ENCODE measurements at regions of chr5 and their contacts with region 1.

Region 1: GRCh38 chr5:59810041-59810440 is 83.5 kb downstream of the PDE4D start:
- DNase-seq: peak; percentile 55
- ATAC-seq: peak; percentile 69
- H3K4me3 ChIP-seq: peak overlapping the region; percentile 45
- H3K27ac ChIP-seq: no peak overlapping the region
- H3K4me1 ChIP-seq: no peaks in the 10 kb centered on the region
- H3K27me3 ChIP-seq: peaks cover 7% of the 10 kb centered on the region; the same call in 1 of the 2 replicates
- CTCF ChIP-seq: peak; percentile 82

Region 2: GRCh38 chr5:59873113-59873512 is 63.1 kb after region 1 on chr5:
- CTCF ChIA-PET with region 1: no interaction called
- POLR2A ChIA-PET with region 1: no interaction called
- intact Hi-C with region 1: no loop called
- DNase-seq: no peak
- ATAC-seq: no peak
- H3K4me3 ChIP-seq: no peak overlapping the region
- H3K27ac ChIP-seq: no peak overlapping the region
- H3K4me1 ChIP-seq: no peaks in the 10 kb centered on the region
- H3K27me3 ChIP-seq: peaks cover 14% of the 10 kb centered on the region
- CTCF ChIP-seq: no peak

Region 3: GRCh38 chr5:59943452-59944113 is 133.5 kb after region 1 on chr5:
- CTCF ChIA-PET with region 1: no interaction called
- POLR2A ChIA-PET with region 1: no interaction called
- intact Hi-C with region 1: no loop called
- DNase-seq: no peak
- ATAC-seq: no peak
- H3K4me3 ChIP-seq: no peak overlapping the region
- H3K27ac ChIP-seq: no peak overlapping the region
- H3K4me1 ChIP-seq: no peaks in the 10 kb centered on the region
- H3K27me3 ChIP-seq: peaks cover 17% of the 10 kb centered on the region
- CTCF ChIP-seq: no peak

Region 4: GRCh38 chr5:60161340-60161934 is 351.4 kb after region 1 on chr5:
- CTCF ChIA-PET with region 1: no interaction called
- POLR2A ChIA-PET with region 1: no interaction called
- intact Hi-C with region 1: loop called (anchors 1 kb)
- DNase-seq: peak; percentile 53
- ATAC-seq: no peak
- H3K4me3 ChIP-seq: no peak overlapping the region
- H3K27ac ChIP-seq: no peak overlapping the region
- H3K4me1 ChIP-seq: no peaks in the 10 kb centered on the region
- H3K27me3 ChIP-seq: 0 out of 2 replicates have a peak, but pooled peaks cover 11% of the 10 kb centered on the region
- CTCF ChIP-seq: peak; percentile 70

Region 5: GRCh38 chr5:60382716-60383115 is 572.7 kb after region 1 on chr5:
- CTCF ChIA-PET with region 1: no interaction called
- POLR2A ChIA-PET with region 1: no interaction called
- intact Hi-C with region 1: loop called (anchors 2 kb)
- DNase-seq: peak; percentile 34
- ATAC-seq: no peak; the same call in 1 of the 2 replicates
- H3K4me3 ChIP-seq: no peak overlapping the region
- H3K27ac ChIP-seq: no peak overlapping the region
- H3K4me1 ChIP-seq: no peaks in the 10 kb centered on the region
- H3K27me3 ChIP-seq: peaks cover 17% of the 10 kb centered on the region
- CTCF ChIP-seq: peak; percentile 61

Region 6: GRCh38 chr5:60586307-60586901 is 776.4 kb after region 1 on chr5:
- CTCF ChIA-PET with region 1: no interaction called
- POLR2A ChIA-PET with region 1: no interaction called
- intact Hi-C with region 1: loop called (anchors 2 kb)
- DNase-seq: peak; percentile 12
- ATAC-seq: no peak
- H3K4me3 ChIP-seq: no peak overlapping the region
- H3K27ac ChIP-seq: no peak overlapping the region
- H3K4me1 ChIP-seq: no peaks in the 10 kb centered on the region
- H3K27me3 ChIP-seq: no peaks in the 10 kb centered on the region
- CTCF ChIP-seq: peak; percentile 57

Region 7: GRCh38 chr5:60649283-60649917 is 839.4 kb after region 1 on chr5:
- CTCF ChIA-PET with region 1: no interaction called
- POLR2A ChIA-PET with region 1: no interaction called
- intact Hi-C with region 1: loop called (anchors 5 kb)
- DNase-seq: peak; percentile 73
- ATAC-seq: peak; percentile 55
- H3K4me3 ChIP-seq: no peak overlapping the region
- H3K27ac ChIP-seq: no peak overlapping the region
- H3K4me1 ChIP-seq: peaks cover 17% of the 10 kb centered on the region
- H3K27me3 ChIP-seq: no peaks in the 10 kb centered on the region
- CTCF ChIP-seq: peak; percentile 78

Region 8: GRCh38 chr5:60668686-60669304 is 858.8 kb after region 1 on chr5:
- CTCF ChIA-PET with region 1: no interaction called
- POLR2A ChIA-PET with region 1: no interaction called
- intact Hi-C with region 1: loop called (anchors 2 kb)
- DNase-seq: peak; percentile 67
- ATAC-seq: no peak
- H3K4me3 ChIP-seq: no peak overlapping the region
- H3K27ac ChIP-seq: no peak overlapping the region
- H3K4me1 ChIP-seq: no peaks in the 10 kb centered on the region
- H3K27me3 ChIP-seq: no peaks in the 10 kb centered on the region
- CTCF ChIP-seq: peak; percentile 76

Measured in PC-3 (cell line).